Activated CD8-positive, alpha-beta memory T cell treated with anti-CD3 and anti-CD28 coated beads, Interleukin-2, amount 10 ng/mL, durations not matched to agents 7 days and 5 days (primary cell): ENCODE measurements at regions of chr1 and their contacts with region 1.

Region 1: GRCh38 chr1:9145021-9145668 is 16.2 kb upstream of the GPR157 start:
- DNase-seq: no peak
- ATAC-seq: peak; percentile 17
- H3K4me3 Mint-ChIP-seq: no peak overlapping the region
- H3K27ac Mint-ChIP-seq: no peak overlapping the region
- H3K4me1 Mint-ChIP-seq: peaks cover 8% of the 10 kb centered on the region
- H3K27me3 Mint-ChIP-seq: no peaks in the 10 kb centered on the region

Region 2: GRCh38 chr1:9048551-9048950 is 96.6 kb before region 1 on chr1:
- CTCF ChIA-PET with region 1: no interaction called
- DNase-seq: no peak
- ATAC-seq: no peak
- H3K4me3 Mint-ChIP-seq: no peak overlapping the region
- H3K27ac Mint-ChIP-seq: no peak overlapping the region
- H3K4me1 Mint-ChIP-seq: no peaks in the 10 kb centered on the region
- H3K27me3 Mint-ChIP-seq: peaks cover 43% of the 10 kb centered on the region

Region 3: DNA sequence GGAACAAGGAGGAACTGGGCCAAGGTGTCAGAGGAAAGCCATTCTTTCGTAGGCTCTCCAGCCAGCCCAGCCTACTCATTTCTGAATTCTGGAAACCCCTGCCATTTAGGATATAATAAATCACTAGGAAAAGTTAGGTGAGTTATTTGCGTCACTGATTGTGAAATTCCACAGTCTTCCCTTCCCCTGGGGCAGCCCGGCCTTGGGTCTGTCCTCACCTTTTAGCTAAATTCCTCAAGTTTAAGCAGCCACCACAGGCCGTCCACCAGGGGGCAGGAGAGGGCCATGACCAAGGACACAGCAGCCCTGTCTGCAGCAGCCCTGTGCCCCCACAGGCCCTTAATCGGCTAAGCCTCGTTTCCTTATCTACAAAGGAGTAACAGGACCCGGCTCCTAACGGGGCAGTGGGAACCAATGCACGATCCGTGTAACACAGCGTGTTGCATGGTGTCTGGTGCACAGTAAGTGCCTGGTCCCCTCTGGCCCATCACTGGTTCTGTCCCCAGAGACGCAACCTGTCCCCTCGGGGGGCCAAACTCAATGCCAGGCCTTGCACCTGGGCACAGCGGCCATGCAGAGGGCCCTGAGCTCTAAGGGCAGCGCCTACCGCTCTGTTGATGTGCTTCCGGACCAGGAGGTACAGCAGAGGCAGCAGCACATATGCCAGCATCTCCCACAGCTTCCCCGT is 34.3 kb before region 1 on chr1:
- CTCF ChIA-PET with region 1: interaction called, 12 read pairs
- DNase-seq: peak; percentile 91
- ATAC-seq: peak; percentile 81
- H3K4me3 Mint-ChIP-seq: no peak overlapping the region
- H3K27ac Mint-ChIP-seq: no peak overlapping the region
- H3K4me1 Mint-ChIP-seq: peaks cover 25% of the 10 kb centered on the region
- H3K27me3 Mint-ChIP-seq: no peaks in the 10 kb centered on the region

Region 4: GRCh38 chr1:9128520-9129265 is 16.5 kb before region 1 on chr1 and contains the start of gene GPR157:
- CTCF ChIA-PET with region 1: interaction called, 13 read pairs
- DNase-seq: peak; percentile 87
- ATAC-seq: peak; percentile 92
- H3K4me3 Mint-ChIP-seq: peak within 1 kb of the TSS; percentile 83
- H3K27ac Mint-ChIP-seq: peak within 1 kb of the TSS; percentile 76
- H3K4me1 Mint-ChIP-seq: peaks cover 26% of the 10 kb centered on the region
- H3K27me3 Mint-ChIP-seq: peaks cover 30% of the 10 kb centered on the region
- total RNA-seq, gene GPR157: 3.6 to 4.5 TPM

Region 5: DNA sequence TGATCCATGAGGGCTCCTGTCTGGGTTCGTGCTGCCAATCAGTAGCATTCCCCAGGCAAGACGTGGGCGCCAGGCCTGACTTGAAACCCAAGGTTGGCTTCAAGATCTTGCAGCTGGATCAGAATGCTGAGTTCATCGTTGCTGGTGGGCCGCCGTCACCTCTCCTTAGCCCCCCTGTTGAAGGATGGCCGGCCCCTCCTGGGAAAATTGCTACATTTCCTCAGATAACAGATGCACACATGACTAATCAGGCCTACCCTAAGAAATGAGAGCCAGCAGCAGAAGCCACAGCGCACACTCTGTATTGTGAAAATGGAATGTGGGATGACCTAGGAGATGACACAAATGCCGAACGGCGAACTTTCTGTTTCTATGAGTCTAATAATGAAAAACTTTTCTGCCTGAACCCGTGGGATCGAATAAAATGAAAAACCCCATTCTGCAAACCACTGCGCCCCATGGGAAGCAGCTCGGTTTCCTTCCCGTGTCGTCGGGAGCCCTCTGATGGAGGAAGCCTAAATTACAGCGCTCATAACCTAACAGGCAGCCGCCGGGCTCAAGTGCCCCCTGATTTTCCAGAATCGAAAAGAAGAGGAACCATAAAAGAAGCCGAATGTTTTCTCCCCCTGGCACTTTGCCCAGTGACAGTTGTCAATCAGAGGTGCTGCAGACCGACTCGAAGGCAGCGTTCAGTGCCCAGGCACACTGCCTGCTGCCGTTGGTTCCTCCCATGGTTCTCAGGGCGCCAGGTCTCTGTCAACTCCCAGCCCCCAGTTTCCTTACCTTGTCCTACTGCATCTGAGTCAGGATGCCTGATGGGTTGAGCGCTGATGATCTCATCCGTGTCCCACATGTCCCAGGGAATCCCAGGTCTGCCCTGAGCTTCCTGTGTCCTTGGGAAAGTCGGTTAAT is 51.2 kb after region 1 on chr1:
- CTCF ChIA-PET with region 1: interaction called, 26 read pairs
- DNase-seq: peak; percentile 74
- ATAC-seq: peak; percentile 68
- H3K4me3 Mint-ChIP-seq: no peak overlapping the region
- H3K27ac Mint-ChIP-seq: no peak overlapping the region
- H3K4me1 Mint-ChIP-seq: peaks cover 28% of the 10 kb centered on the region
- H3K27me3 Mint-ChIP-seq: peaks cover 72% of the 10 kb centered on the region

Region 6: DNA sequence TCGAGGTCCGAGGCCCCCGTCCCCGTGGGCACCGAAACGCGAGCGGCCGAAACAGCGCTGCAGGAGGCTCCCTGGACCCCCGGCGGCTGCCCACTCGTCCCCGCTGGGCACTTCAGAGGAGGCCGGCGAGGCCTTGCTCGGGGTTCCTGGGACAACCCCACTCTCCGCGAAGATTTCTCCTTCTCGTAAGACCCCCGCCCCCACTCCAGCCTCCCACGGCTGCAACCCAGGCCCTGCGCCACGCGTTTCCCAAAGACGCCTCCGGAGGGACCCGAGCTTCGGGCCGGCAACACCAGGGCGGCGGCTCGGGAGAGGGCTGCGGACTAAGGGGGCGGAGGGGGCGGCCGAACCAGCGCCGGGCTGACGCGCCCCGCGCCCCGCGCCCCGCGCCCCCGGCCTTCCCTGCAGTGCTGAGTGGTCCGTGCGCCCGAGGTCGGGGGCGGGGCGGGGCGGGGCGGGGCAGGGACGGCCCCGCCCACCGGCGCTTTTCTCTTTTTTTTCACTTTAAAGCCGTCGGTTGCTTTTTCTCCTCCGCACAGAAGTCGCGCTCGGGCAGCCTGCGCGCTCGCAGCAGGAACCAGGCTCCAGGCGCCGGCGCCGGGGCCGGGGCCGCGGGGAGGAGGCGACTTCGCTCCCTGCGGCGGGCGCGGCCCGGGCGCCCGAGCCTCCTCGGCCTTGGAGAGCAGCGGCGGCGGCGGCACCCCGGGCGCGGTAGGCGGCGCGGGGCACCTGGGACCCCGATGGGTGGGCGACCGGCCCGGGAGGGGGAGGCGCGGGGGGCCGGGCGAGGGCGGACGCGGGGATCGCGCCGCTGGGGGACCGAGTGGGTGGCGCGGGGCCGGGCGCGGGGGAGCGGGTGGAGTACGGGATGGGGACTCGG is 147.5 kb after region 1 on chr1 and contains the start of gene SPSB1:
- CTCF ChIA-PET with region 1: no interaction called
- DNase-seq: peak; percentile 75
- ATAC-seq: peak; percentile 72
- H3K4me3 Mint-ChIP-seq: peak within 1 kb of the TSS; percentile 40
- H3K27ac Mint-ChIP-seq: no peak within 1 kb of the TSS
- H3K4me1 Mint-ChIP-seq: peaks cover 9% of the 10 kb centered on the region
- H3K27me3 Mint-ChIP-seq: peaks cover 15% of the 10 kb centered on the region
- total RNA-seq, gene SPSB1: 8.2 to 9.0 TPM